PC-9 (cell line): ENCODE measurements at regions of chr13 and their contacts with region 1.

Region 1: GRCh38 chr13:66659701-66660462 is 570.3 kb downstream of the PCDH9 start:
- DNase-seq: peak; percentile 17 to 37
- H3K4me3 ChIP-seq: no peak overlapping the region
- H3K27ac ChIP-seq: no peak overlapping the region
- H3K4me1 ChIP-seq: peaks cover 6% of the 10 kb centered on the region; the same call in 1 of the 2 replicates
- H3K27me3 ChIP-seq: no peaks in the 10 kb centered on the region
- CTCF ChIP-seq: no peak

Region 2: DNA sequence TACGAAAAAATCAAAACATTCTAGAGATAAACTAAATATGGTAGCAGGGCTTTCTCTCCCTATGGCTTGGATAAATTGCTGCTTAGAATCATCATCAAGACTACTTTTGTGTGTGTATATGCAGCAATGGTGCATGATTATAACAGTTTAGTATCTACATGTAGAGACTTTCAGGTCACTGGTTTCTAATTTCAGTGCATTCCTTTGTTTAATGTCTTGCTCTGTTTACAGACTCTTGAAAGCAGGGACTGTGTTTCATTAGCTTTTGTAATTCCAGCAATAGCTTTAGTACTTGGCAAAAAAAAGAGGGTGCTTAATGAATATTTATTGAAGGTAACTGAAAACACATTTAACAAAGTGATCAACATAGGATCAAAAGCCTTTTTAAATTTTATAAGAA is 149.6 kb after region 1 on chr13:
- CTCF ChIA-PET with region 1: no interaction called
- POLR2A ChIA-PET with region 1: interaction called, 13 read pairs
- intact Hi-C with region 1: no loop called
- DNase-seq: no peak
- H3K4me3 ChIP-seq: no peak overlapping the region
- H3K27ac ChIP-seq: no peak overlapping the region
- H3K4me1 ChIP-seq: no peaks in the 10 kb centered on the region
- H3K27me3 ChIP-seq: no peaks in the 10 kb centered on the region
- CTCF ChIP-seq: no peak